Posterior cingulate gyrus (tissue), 11 donors: ENCODE measurements at regions of chr2 and their contacts with region 1.

Region 1: DNA sequence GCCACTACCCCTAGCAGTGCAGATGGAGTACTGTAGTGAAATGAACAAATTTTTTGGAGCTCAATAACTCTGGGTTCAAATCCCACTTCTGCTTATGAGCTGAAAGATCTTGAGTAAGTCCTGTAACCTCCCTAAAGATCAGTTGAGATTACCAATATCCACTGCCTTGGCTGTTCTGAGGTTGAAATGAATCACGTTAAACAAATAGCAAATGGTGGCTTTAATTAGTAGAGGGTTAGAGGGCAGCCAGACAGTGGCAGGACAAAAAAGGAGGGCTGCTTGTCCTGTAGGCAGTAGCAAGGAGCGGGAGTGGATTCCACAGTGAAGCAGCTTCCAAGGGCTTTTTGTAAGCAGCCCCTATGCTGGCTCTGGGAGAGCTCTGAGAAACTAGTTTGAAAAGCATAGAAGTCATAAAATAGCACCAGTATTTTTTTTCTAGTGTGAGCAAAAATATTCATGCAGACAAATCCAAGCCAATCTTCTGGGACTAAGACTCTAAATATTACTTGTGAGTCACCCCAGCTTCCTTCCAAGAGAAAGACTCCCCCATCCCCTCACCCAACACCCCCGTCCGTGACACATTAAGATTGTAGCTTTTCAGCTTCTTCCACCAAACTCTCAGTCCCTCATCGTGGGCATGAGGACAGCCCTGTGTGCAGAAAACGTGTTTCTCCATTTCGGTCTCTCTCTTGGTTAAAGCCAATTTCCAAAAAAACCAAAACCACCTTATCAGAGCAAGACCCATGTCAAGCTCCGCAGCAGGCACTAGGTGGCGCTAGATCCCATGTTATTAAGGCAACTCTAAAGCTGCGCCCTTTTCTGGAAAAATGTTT is 123.5 kb upstream of the LGALSL start:
- DNase-seq: peak; percentile 52 to 95 (median 76)

Region 2: DNA sequence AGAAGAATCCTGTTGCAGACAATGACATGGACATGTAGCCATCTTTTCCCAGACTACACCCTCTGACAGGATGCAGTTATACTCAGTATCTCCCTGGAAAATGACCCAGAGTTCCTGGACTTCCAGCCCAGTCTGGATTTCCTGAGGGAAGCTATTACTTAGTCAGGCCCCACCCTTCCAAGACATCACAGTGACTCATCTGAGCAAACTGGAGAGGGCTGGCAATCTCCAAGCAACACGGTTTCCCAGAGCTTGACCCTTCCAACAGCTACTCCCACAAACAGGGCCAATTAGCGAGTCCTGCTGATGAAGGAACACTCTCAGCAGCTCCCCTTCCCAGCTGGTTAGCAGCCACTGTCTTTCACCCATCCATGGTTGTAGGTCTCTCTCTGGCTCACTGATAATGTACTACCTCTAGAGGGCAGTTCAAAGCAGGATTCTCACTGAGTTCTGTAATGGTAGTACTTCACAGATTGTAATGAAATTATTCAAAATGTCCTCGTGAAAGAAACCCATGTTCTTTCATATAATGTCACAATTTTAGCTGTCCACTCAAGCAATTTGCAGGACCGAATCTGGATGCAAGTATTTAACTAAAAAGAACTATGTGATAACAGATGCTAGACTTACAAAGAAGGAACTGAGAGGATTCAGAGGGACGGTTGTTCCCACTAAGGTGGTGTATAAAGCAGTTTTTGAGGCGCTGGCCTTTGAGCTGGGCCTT is 631.5 kb before region 1 on chr2:
- intact Hi-C with region 1: loop called (anchors 10 kb)
- DNase-seq: peak in 3 of 10 donors; percentile 8 to 18 (median 13)

Region 3: DNA sequence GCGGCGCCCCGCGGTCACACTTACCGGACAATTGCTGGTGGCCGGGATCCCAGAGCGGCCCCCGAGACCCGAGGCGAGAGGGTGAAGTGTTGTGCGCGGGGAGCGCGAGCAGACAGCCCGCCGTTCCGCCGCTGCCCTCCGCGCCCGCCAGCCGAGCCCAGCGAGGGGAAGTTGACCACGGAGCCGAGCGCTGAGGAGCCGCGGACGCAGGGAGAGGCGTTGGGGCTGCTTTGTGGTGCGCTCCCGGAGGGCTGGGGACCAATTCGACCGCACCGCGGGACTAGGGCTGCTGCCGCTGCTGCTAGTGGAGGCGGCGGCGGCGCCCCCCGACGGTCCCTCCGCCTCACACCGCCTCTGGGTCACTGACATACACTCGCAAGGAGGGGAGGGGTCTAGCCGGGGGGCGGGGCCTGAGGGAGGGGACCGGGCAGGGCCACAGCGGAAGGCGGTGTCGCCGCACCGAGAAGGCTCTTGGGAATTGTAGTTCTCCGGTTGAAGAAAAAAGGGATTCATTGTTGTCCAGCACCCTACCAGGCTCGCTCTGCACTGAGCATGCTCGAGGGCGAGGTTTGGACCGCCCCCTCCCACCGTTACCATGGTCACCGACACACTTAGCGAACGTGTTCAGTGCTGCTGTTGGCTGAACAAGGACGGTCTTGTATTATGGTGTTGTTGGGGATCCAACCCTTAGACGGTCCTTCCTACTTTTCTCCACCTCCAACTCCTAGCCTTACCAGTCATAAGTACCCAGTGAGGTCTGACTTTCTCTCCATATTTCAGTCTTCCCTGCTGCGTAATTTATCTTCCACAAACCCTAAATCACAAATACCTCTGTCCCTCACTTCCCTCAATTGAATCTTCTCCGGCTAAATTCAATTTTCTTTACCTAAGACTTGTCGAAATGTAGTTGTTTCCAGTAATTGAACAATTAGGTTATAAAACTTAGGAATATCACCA is 186.2 kb before region 1 on chr2 and contains the start of gene PELI1:
- intact Hi-C with region 1: loop called (anchors 5 kb)
- DNase-seq: peak; percentile 94 to 100 (median 98)

Region 4: GRCh38 chr2:64504774-64505720 is 174.6 kb after region 1 on chr2:
- intact Hi-C with region 1: no loop called
- DNase-seq: peak in 1 of 10 donors; percentile 66

Region 5: DNA sequence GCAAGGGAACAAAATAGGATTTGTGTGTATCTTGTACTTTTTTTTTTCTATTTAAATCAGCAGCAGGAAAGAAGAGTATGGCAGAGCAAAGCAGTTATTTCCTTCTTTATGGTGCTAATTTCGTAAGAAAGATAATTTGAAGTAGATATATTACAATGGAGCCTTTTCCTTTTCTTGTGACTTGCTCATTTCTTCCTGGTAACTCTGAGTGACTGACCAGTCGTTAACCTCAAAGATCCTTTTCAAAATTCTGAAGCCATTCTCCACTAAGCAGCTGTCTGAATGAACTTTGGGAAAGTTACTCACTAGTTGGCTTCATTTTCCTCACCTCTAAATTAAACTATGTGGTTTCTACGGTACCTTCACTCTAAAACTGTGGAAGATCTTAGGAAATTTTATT is 218.3 kb after region 1 on chr2:
- intact Hi-C with region 1: no loop called
- DNase-seq: no peak

Region 6: DNA sequence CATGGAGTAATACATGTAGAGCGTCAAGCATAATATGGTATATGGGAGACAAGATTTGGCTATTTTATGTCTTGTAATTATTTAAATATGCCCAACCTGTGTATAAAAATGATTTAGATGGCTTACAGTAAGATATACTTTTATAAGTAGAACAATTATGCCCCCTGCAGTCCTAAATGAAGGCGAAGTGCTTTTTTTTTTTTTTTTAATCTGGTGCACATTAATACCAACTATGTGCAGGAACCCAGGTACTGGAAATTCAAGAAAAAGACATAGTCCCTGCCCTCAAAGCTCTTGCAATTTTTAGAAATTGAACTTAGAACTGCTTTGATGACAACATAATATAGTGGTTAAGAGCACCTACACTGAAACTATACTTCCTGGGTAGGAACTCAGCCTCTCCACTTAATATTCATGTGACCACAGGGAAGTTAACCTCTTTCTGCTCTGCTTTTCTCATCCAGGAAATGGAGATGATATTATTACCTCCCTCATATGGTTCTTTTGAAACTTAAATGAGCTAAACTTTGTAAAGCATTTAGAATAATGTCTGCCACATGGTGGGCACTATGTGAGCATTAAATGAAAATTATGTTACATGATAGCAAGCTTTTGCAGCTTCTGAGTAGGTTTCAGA is 231.8 kb after region 1 on chr2:
- intact Hi-C with region 1: loop called (anchors 10 kb)
- DNase-seq: no peak

Region 7: GRCh38 chr2:64582774-64583340 is 252.4 kb after region 1 on chr2:
- intact Hi-C with region 1: no loop called
- DNase-seq: no peak

Region 8: GRCh38 chr2:65040400-65041261 is 710.1 kb after region 1 on chr2:
- intact Hi-C with region 1: loop called (anchors 10 kb)
- DNase-seq: peak; percentile 74 to 97 (median 86)